Ovary (tissue), 10 donors: ENCODE measurements at regions of chr17 and their contacts with region 1.

Region 1: DNA sequence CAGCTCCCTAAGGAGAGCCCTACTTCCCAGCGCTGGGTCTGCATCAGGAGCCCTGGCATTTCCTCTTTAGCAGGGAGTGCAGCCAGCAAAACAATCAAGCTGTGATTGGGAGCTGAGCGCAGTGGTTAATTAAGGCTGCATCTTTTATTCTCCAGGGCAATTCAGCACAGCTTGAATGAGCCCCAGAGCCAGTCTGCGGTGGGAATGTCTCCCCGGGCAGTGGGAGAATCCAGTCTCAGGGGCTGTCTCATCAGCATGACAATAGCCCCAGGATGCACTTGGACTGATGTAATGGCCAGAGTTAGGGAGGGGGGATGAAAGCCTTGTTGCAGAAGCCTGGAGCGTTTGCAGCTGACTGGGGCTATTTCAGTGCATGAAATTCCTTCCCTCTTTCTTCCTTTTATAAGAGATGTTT is 292.6 kb upstream of the SOX9 start:
- DNase-seq: no peak
- H3K4me3 ChIP-seq: no peak overlapping the region
- H3K27ac ChIP-seq: no peak overlapping the region
- H3K4me1 ChIP-seq: no peaks in the 10 kb centered on the region
- H3K27me3 ChIP-seq: no peaks in the 10 kb centered on the region
- CTCF ChIP-seq: no peak
- EP300 ChIP-seq: no peak
- POLR2A ChIP-seq: no peak

Region 2: GRCh38 chr17:71872843-71873485 is 44.8 kb after region 1 on chr17:
- intact Hi-C with region 1: loop called in 1 of 4 experiments (anchors 2 kb)
- DNase-seq: no peak
- H3K4me3 ChIP-seq: no peak overlapping the region
- H3K27ac ChIP-seq: no peak overlapping the region
- H3K4me1 ChIP-seq: no peaks in the 10 kb centered on the region
- H3K27me3 ChIP-seq: no peaks in the 10 kb centered on the region
- CTCF ChIP-seq: no peak
- EP300 ChIP-seq: no peak
- POLR2A ChIP-seq: no peak

Region 3: GRCh38 chr17:73690676-73691075 is 1862.5 kb after region 1 on chr17:
- intact Hi-C with region 1: loop called in 1 of 4 experiments (anchors 5 kb)
- DNase-seq: no peak
- H3K4me3 ChIP-seq: no peak overlapping the region
- H3K27ac ChIP-seq: no peak overlapping the region
- H3K4me1 ChIP-seq: no peaks in the 10 kb centered on the region
- H3K27me3 ChIP-seq: no peaks in the 10 kb centered on the region
- CTCF ChIP-seq: no peak
- EP300 ChIP-seq: no peak
- POLR2A ChIP-seq: no peak